Mucosa of descending colon (tissue), 3 donors: ENCODE measurements at regions of chr9 and their contacts with region 1.

Region 1: DNA sequence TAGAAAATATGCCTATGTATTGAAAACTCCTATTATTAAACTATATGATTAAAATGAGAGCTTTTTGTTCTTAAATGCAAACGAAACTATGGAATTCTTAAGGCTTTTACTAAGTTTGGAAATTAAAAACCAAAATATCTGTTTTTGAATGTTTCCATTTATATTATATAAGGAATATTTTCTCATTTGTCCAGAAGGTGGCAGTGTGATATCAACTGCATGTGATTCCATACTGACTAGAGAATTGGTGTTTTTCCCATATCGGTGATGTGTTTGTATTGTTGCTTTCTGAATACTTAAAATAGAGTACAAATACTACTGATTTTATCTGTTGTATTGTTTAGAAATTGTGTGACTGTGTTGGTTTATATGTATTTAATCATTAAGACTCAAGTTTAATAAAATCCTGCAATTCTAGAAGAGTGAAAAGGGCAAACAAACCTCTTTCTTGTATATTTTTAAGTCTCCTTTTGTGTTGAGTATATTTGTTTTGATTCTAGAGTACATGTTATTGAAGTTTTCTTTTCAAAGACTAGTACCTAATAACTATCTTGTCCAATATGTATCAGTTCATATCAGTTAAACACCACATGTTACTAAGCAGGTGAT is 320.8 kb downstream of the CCDC171 start:
- DNase-seq: peak in 1 of 3 donors; percentile 3
- ATAC-seq: peak; percentile 37
- H3K4me3 ChIP-seq: no peak overlapping the region
- H3K4me1 ChIP-seq: no peaks in the 10 kb centered on the region
- CTCF ChIP-seq: peak; percentile 14

Region 2: DNA sequence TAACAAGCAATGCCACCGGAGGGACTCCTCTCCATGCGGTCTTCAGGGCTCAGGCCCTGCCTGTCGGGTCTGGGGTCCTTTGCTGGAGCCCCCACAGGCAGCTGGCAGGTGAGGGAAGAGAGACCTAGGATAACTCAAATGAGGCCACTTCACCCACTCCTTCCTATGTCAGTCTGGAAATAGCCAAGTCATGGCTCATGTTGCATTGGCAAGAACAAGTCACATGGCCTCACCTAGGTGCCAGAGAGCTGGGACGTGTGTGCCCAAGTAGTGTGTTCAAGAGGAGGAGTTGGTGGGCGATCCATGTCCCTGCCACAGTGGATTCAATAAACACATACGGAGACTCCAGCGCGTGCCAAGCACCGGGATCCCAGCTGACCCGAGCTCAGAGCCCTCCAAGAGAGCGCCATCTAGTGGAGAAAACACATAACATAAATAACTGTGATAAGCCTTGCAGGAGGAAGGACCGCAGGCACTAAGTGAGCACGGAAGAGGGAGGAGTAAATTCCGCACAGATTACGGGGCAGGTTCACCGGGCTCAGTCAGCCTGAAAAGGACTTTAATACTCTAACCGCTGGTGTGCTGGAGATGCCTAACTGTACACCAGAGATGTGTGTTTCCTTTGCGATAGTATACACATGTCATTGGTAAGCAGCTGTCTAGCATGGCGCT is 260.0 kb after region 1 on chr9:
- intact Hi-C with region 1: loop called in 1 of 2 experiments (anchors 5 kb)
- DNase-seq: peak in 2 of 3 donors; percentile 46 to 53
- ATAC-seq: peak; percentile 87
- H3K4me3 ChIP-seq: no peak overlapping the region
- H3K4me1 ChIP-seq: no peaks in the 10 kb centered on the region
- CTCF ChIP-seq: no peak

Region 3: DNA sequence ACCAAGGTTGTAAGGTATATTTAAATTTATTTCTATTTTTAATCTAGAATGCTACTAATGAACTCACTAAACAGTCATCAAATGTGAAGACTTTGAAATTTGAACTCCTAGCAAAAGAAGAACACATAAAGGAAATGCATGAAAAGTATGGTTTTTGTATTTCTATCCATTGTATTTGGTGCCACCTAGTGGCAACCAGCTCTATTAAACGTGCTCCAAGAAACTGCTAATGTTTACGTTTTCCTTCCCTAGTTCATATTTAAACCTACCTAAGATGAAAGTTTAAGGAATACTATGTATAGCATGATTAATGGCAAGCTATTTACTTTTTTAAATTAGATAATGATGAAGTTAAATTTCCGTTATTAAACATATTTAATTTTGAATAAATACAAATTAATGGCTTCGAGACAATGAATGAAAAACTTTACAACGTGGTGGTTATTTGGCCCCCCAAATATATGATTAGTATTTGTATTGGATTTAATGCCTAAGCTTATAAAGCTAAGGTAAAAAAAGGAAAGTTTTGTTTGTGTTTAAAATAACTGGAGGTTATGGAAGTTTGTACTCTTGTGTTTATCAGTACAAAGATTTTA is 1589.3 kb after region 1 on chr9:
- intact Hi-C with region 1: loop called in 1 of 2 experiments (anchors 10 kb)
- DNase-seq: peak in 1 of 3 donors; percentile 77
- ATAC-seq: peak; percentile 62
- H3K4me3 ChIP-seq: no peak overlapping the region
- H3K4me1 ChIP-seq: no peaks in the 10 kb centered on the region
- CTCF ChIP-seq: no peak